ENCODE measurements at regions of chr15 and their contacts with region 1.

Region 1: GRCh38 chr15:38683382-38684242 is 119.0 kb upstream of the RASGRP1 start:
- DNase-seq: peak; percentile 37 to 88 (median 74)
- ATAC-seq: peak; percentile 62
- H3K4me3 ChIP-seq: no peak overlapping the region
- H3K4me3 Mint-ChIP-seq: peak overlapping the region; percentile 3
- H3K27ac ChIP-seq: peak overlapping the region in 1 of 2 experiments; percentile 15
- H3K27ac Mint-ChIP-seq: peak overlapping the region; percentile 91
- H3K4me1 ChIP-seq: peaks cover 60% of the 10 kb centered on the region
- H3K4me1 Mint-ChIP-seq: peaks cover 76% of the 10 kb centered on the region
- H3K27me3 ChIP-seq: no peaks in the 10 kb centered on the region
- H3K27me3 Mint-ChIP-seq: no peaks in the 10 kb centered on the region
- CTCF ChIP-seq: peak; percentile 93

Region 2: GRCh38 chr15:38389924-38390542 is 293.6 kb before region 1 on chr15:
- CTCF ChIA-PET with region 1: no interaction called
- POLR2A ChIA-PET with region 1: no interaction called
- intact Hi-C with region 1: no loop called
- DNase-seq: peak; percentile 28 to 70 (median 58)
- ATAC-seq: no peak
- H3K4me3 ChIP-seq: no peak overlapping the region
- H3K4me3 Mint-ChIP-seq: no peak overlapping the region
- H3K27ac ChIP-seq: no peak overlapping the region
- H3K27ac Mint-ChIP-seq: no peak overlapping the region
- H3K4me1 ChIP-seq: no peaks in the 10 kb centered on the region
- H3K4me1 Mint-ChIP-seq: no peaks in the 10 kb centered on the region
- H3K27me3 ChIP-seq: peaks cover 0 to 2% of the 10 kb centered on the region in 2 experiments
- H3K27me3 Mint-ChIP-seq: peaks cover 15% of the 10 kb centered on the region
- CTCF ChIP-seq: peak; percentile 85

Region 3: GRCh38 chr15:38508647-38509046 is 175.0 kb before region 1 on chr15:
- CTCF ChIA-PET with region 1: interaction called, 44 read pairs
- POLR2A ChIA-PET with region 1: interaction called, 11 read pairs
- intact Hi-C with region 1: no loop called
- DNase-seq: no peak
- ATAC-seq: no peak
- H3K4me3 ChIP-seq: no peak overlapping the region
- H3K4me3 Mint-ChIP-seq: no peak overlapping the region
- H3K27ac ChIP-seq: peak overlapping the region in 1 of 2 experiments; percentile 17
- H3K27ac Mint-ChIP-seq: peak overlapping the region; percentile 80
- H3K4me1 ChIP-seq: no peaks in the 10 kb centered on the region
- H3K4me1 Mint-ChIP-seq: peaks cover 10% of the 10 kb centered on the region
- H3K27me3 ChIP-seq: no peaks in the 10 kb centered on the region
- H3K27me3 Mint-ChIP-seq: no peaks in the 10 kb centered on the region
- CTCF ChIP-seq: no peak

Region 4: DNA sequence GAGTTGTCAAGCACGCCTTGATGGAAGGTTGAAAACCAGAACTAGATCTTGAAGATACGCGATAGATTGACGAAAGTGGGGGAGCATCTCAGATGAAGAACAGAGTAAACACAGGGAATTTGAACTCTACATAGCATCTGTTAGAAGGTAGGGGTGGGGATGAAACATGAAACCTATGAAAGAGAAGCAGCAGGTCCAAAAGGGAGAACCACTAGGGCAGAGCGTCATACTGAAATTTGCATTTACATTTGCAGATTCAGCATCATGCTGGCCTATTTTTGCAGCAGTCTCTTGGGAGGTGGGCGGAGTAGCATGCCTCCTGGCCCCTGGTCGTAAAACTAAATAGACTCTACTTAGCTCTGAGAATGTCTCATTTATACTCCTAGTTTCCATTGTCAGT is 72.9 kb before region 1 on chr15:
- CTCF ChIA-PET with region 1: interaction called, 7 read pairs
- POLR2A ChIA-PET with region 1: no interaction called
- intact Hi-C with region 1: loop called in 1 of 2 experiments (anchors 1 kb)
- DNase-seq: peak in 3 of 9 experiments; percentile 28 to 53 (median 28)
- ATAC-seq: peak; percentile 78
- H3K4me3 ChIP-seq: no peak overlapping the region
- H3K4me3 Mint-ChIP-seq: peak overlapping the region; percentile 13
- H3K27ac ChIP-seq: peak overlapping the region in 1 of 2 experiments; percentile 69
- H3K27ac Mint-ChIP-seq: peak overlapping the region; percentile 93
- H3K4me1 ChIP-seq: peaks cover 41% of the 10 kb centered on the region
- H3K4me1 Mint-ChIP-seq: peaks cover 54% of the 10 kb centered on the region
- H3K27me3 ChIP-seq: no peaks in the 10 kb centered on the region
- H3K27me3 Mint-ChIP-seq: no peaks in the 10 kb centered on the region
- CTCF ChIP-seq: no peak

Region 5: GRCh38 chr15:38636597-38636996 is 47.0 kb before region 1 on chr15:
- CTCF ChIA-PET with region 1: interaction called, 508 read pairs
- POLR2A ChIA-PET with region 1: interaction called, 5 read pairs
- intact Hi-C with region 1: loop called in 1 of 2 experiments (anchors 10 kb)
- DNase-seq: no peak
- ATAC-seq: no peak
- H3K4me3 ChIP-seq: no peak overlapping the region
- H3K4me3 Mint-ChIP-seq: no peak overlapping the region
- H3K27ac ChIP-seq: no peak overlapping the region
- H3K27ac Mint-ChIP-seq: no peak overlapping the region
- H3K4me1 ChIP-seq: peaks cover 22% of the 10 kb centered on the region
- H3K4me1 Mint-ChIP-seq: peaks cover 35% of the 10 kb centered on the region
- H3K27me3 ChIP-seq: no peaks in the 10 kb centered on the region
- H3K27me3 Mint-ChIP-seq: no peaks in the 10 kb centered on the region
- CTCF ChIP-seq: no peak

Region 6: DNA sequence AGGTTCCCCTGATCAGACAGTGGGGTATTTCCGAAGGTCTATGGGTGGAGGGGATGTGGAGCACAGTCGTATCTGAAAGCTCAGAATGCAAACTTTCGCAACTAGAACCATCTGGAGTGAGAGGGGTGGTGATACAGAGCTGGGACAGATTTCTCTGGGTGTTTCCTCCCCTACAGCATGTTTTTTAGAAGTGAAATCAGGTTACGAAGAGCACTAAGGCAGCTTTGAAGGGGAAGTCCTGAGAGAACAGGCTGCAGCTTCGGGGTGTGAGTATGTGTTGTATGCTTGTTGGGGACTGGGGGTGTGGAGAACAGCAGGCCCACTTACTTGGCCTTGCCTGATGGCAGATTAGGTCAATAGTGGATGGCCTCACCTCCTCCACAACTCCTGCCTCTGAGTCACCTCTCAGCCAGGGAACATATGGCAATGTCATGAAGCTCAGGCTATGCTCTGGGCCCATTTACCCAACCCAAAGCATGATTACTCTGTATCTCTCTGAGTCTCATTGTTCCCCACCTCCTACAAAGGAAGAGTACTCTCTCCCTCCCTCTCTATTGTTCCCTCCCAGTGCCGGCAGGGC is 11.8 kb before region 1 on chr15:
- CTCF ChIA-PET with region 1: interaction called, 292 read pairs
- POLR2A ChIA-PET with region 1: interaction called, 19 read pairs
- intact Hi-C with region 1: loop called in 1 of 2 experiments (anchors 1 kb)
- DNase-seq: peak in 6 of 9 experiments; percentile 39 to 91 (median 64)
- ATAC-seq: peak; percentile 61
- H3K4me3 ChIP-seq: peak overlapping the region in 1 of 2 experiments; percentile 3
- H3K4me3 Mint-ChIP-seq: peak overlapping the region; percentile 61
- H3K27ac ChIP-seq: peak overlapping the region; percentile 70 to 84
- H3K27ac Mint-ChIP-seq: peak overlapping the region; percentile 97
- H3K4me1 ChIP-seq: peaks cover 77% of the 10 kb centered on the region
- H3K4me1 Mint-ChIP-seq: peaks cover 77% of the 10 kb centered on the region
- H3K27me3 ChIP-seq: no peaks in the 10 kb centered on the region
- H3K27me3 Mint-ChIP-seq: no peaks in the 10 kb centered on the region
- CTCF ChIP-seq: no peak

Region 7: GRCh38 chr15:38761681-38762080 is 78.1 kb after region 1 on chr15:
- CTCF ChIA-PET with region 1: no interaction called
- POLR2A ChIA-PET with region 1: no interaction called
- intact Hi-C with region 1: no loop called
- DNase-seq: no peak
- ATAC-seq: no peak
- H3K4me3 ChIP-seq: no peak overlapping the region
- H3K4me3 Mint-ChIP-seq: no peak overlapping the region
- H3K27ac ChIP-seq: no peak overlapping the region
- H3K27ac Mint-ChIP-seq: no peak overlapping the region
- H3K4me1 ChIP-seq: no peaks in the 10 kb centered on the region
- H3K4me1 Mint-ChIP-seq: no peaks in the 10 kb centered on the region
- H3K27me3 ChIP-seq: no peaks in the 10 kb centered on the region
- H3K27me3 Mint-ChIP-seq: peaks cover 4% of the 10 kb centered on the region
- CTCF ChIP-seq: no peak